Panc1 (cell line): ENCODE measurements at regions of chr7 and their contacts with region 1.

Region 1: DNA sequence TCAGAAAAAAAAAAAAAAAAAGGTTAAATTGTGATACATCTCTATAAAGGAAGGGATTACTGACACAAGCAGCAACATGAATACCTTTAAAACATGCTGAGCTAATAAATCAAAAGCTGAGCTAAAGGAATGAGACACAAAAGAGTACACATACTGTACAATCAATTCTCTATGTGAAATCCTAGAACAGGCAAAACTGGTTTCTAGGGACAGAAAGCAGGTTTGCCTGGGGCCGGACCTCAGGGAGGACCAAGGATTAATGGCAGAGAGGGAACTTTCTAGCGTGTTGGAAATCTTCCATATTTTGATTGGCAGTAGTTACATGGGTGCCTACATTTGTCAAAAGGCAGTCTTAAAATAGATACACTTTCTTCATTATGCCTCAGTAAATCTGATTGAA is 52.5 kb downstream of the KLRG2 start:
- DNase-seq: no peak
- ATAC-seq: no peak
- H3K4me3 ChIP-seq: no peak overlapping the region
- H3K27ac ChIP-seq: no peak overlapping the region
- H3K4me1 ChIP-seq: no peaks in the 10 kb centered on the region
- H3K27me3 ChIP-seq: no peaks in the 10 kb centered on the region
- CTCF ChIP-seq: no peak

Region 2: GRCh38 chr7:139416405-139416804 is 14.6 kb before region 1 on chr7:
- CTCF ChIA-PET with region 1: interaction called, 4 read pairs
- POLR2A ChIA-PET with region 1: interaction called, 10 read pairs
- in situ Hi-C with region 1: no loop called
- intact Hi-C with region 1: no loop called
- DNase-seq: no peak
- ATAC-seq: no peak
- H3K4me3 ChIP-seq: no peak overlapping the region
- H3K27ac ChIP-seq: no peak overlapping the region
- H3K4me1 ChIP-seq: no peaks in the 10 kb centered on the region
- H3K27me3 ChIP-seq: no peaks in the 10 kb centered on the region
- CTCF ChIP-seq: no peak

Region 3: GRCh38 chr7:139446036-139446881 is 15.2 kb after region 1 on chr7:
- CTCF ChIA-PET with region 1: interaction called, 3 read pairs
- POLR2A ChIA-PET with region 1: interaction called, 11 read pairs
- in situ Hi-C with region 1: no loop called
- intact Hi-C with region 1: no loop called
- DNase-seq: no peak
- ATAC-seq: no peak
- H3K4me3 ChIP-seq: no peak overlapping the region
- H3K27ac ChIP-seq: no peak overlapping the region
- H3K4me1 ChIP-seq: no peaks in the 10 kb centered on the region
- H3K27me3 ChIP-seq: no peaks in the 10 kb centered on the region
- CTCF ChIP-seq: no peak

Region 4: GRCh38 chr7:139482662-139483469 is 51.9 kb after region 1 on chr7:
- CTCF ChIA-PET with region 1: no interaction called
- POLR2A ChIA-PET with region 1: interaction called, 11 read pairs
- in situ Hi-C with region 1: no loop called
- intact Hi-C with region 1: no loop called
- DNase-seq: no peak
- ATAC-seq: no peak
- H3K4me3 ChIP-seq: no peak overlapping the region; a peak in 1 of 4 replicates
- H3K27ac ChIP-seq: no peak overlapping the region
- H3K4me1 ChIP-seq: no peaks in the 10 kb centered on the region
- H3K27me3 ChIP-seq: no peaks in the 10 kb centered on the region
- CTCF ChIP-seq: no peak

Region 5: DNA sequence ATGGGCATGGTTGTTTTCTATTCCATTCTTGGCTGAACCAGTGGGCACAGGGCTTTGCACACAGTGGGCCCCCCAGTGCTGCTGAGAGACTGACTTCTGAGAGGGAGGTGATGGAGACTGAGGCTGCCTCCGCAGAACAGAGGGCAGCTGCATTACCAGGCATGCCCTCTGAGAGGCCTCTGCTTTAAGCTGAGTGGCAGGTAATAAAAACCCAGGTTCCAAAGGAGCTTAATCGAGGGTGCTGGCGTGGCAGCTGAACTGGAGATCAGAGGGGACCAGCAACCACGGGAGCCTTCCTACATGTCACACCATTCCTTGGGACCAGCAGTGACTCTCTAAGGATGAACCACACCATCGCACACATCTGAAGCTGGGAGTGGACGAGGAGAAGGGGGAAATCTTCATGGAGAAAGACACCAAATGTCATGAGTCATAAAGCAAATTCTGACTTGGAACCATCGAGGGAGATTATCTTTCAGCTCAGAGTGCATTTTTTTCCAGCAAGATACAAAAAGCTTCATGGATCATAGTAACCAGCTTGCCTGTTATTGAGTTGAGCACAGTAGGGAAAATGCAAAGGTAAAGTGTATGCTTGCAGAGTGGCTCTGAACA is 322.2 kb after region 1 on chr7:
- CTCF ChIA-PET with region 1: no interaction called
- POLR2A ChIA-PET with region 1: no interaction called
- in situ Hi-C with region 1: no loop called
- intact Hi-C with region 1: no loop called
- DNase-seq: no peak
- ATAC-seq: peak; percentile 57; the same call in 1 of the 2 replicates
- H3K4me3 ChIP-seq: no peak overlapping the region
- H3K27ac ChIP-seq: no peak overlapping the region
- H3K4me1 ChIP-seq: no peaks in the 10 kb centered on the region
- H3K27me3 ChIP-seq: no peaks in the 10 kb centered on the region
- CTCF ChIP-seq: no peak